Thyroid gland (tissue), 4 donors: ENCODE measurements at regions of chr19 and their contacts with region 1.

Region 1: DNA sequence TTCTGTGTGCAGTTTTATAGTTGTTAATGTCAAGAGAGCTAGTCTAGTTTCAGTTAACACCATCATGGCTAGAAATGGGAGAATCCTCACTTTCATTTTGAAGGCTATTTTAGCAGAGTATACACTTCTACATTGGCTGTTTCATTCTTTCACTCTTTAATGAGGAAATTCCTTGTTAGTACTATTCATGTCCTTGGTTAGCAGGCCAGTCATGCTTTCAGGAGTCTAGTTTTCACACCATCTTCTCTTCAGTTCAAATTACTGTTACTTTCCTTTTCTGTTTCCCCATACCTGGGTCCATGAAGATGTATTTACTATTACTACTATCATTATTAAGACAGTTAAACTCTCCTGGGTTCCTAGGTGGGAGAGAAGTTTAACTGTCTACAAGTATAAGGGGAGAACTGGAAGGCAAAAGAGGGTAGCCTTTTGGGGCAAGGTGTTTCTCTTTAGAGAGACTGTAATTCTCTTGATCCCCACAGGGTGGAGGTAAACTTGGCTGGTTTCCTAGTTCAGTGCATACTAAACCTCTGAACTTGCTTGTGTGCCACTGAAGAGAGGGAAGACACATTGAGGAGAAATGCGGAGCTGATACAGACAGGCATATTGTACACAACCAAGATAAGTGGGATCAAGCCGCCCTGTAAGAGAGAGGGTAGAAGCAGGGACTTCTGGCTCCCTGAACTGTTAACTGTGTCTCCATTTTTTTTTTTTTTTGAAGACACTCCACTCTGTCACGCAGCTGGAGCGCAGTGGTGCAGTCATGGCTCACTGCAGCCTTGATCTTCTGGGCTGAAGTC is 41.3 kb upstream of the IGFL4 start:
- DNase-seq: peak; percentile 20 to 42
- H3K4me3 ChIP-seq: no peak overlapping the region
- H3K27ac ChIP-seq: no peak overlapping the region
- H3K4me1 ChIP-seq: peaks cover under 1 to 3% of the 10 kb centered on the region in 2 donors
- H3K27me3 ChIP-seq: peaks cover 12% of the 10 kb centered on the region
- CTCF ChIP-seq: peak; percentile 5 to 84 (median 72)
- POLR2A ChIP-seq: no peak

Region 2: DNA sequence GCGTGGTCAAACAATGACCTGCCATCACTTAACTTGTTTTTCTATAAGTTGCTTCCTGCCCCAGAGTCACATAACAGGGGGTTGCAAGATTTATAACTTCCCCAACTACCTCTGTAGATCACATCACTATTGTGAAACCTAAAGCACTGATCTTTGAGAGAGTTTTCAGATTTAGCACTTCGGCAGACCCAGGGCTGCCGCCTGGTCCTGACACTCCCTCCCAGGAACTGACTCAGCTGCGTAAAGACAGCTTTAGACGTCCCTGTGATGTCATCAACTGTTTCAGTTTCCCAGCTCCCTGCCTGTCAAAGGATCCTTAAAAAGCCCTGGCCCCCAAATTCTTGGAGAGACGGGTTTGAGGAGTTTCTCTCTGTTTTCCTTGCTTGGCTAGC is 99.3 kb after region 1 on chr19:
- intact Hi-C with region 1: loop called (anchors 10 kb)
- DNase-seq: peak; percentile 15 to 23
- H3K4me3 ChIP-seq: no peak overlapping the region
- H3K27ac ChIP-seq: no peak overlapping the region
- H3K4me1 ChIP-seq: peaks cover 0 to 5% of the 10 kb centered on the region in 2 donors
- H3K27me3 ChIP-seq: no peaks in the 10 kb centered on the region
- CTCF ChIP-seq: no peak
- POLR2A ChIP-seq: no peak

Region 3: DNA sequence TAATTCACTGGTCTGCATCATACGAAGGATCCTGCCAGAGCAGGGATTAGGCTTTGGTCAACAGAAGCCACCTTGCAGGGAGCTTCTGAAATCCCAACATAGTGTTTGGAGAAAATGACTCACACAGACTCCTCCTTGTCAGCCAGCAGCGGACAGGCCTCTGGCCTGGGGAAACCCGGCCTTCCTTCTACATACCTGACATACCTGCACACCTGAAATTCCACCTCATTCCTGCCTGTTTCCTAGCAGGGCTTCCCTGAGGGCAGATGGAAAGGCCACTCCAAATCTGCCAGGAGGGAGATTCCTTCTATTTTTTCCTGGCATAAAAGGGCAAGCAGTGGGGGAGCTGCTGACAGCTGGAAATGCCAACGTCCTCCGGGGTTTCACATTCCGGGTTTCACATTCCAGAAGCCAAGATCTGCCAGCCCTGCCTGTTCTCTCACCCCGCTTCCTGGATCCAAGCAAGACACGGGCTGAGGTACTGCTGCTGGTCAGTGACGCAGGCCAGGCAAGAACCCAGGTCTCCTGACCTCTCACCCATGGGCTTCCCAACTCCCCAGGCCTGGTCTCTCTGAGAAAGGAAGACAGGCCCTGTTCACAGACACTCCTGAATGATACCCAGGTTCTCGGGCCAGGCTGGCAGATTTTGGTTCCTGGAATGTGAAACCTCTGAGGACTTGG is 129.2 kb after region 1 on chr19:
- intact Hi-C with region 1: no loop called
- DNase-seq: peak; percentile 45 to 62
- H3K4me3 ChIP-seq: no peak overlapping the region
- H3K27ac ChIP-seq: peak overlapping the region; percentile 11 to 43 (median 17)
- H3K4me1 ChIP-seq: peaks cover 6 to 13% of the 10 kb centered on the region in 2 donors
- H3K27me3 ChIP-seq: no peaks in the 10 kb centered on the region
- CTCF ChIP-seq: no peak
- POLR2A ChIP-seq: no peak

Region 4: DNA sequence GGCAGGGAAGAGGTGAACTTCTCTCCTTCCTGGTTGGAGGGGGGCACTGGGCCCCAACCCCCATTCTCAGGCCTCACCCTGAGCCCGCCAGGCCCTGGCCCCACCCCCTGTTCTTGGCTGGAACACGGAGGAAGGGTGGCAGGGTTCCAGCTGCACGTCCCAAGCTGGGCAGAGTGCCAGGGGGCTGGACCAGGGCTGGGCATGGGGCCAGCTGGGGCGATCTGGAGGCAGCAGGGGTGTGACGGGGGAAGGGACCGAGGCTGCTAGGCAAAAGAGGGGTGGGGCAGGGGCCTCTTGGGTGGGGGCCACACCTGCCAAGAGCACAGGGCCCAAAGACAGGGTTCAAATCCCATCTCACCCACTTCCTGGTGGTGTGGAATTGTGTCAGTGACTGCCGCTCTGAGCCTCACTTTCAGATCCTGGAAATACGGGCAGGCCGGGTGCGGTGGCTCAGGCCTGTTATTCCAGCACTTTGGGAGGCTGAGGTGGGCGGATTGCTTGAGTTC is 216.9 kb after region 1 on chr19:
- intact Hi-C with region 1: no loop called
- DNase-seq: peak; percentile 98 to 99
- H3K4me3 ChIP-seq: peak overlapping the region in 1 of 3 donors; percentile 16
- H3K27ac ChIP-seq: peak overlapping the region; percentile 76 to 83 (median 80)
- H3K4me1 ChIP-seq: peaks cover 45 to 56% of the 10 kb centered on the region in 2 donors
- H3K27me3 ChIP-seq: no peaks in the 10 kb centered on the region
- CTCF ChIP-seq: no peak
- POLR2A ChIP-seq: peak in 1 of 2 donors; percentile 29